Transverse colon (tissue), 4 donors: ENCODE measurements at regions of chr9 and their contacts with region 1.

Region 1: GRCh38 chr9:103574056-103574455 is 520.1 kb upstream of the SMC2 start:
- DNase-seq: no peak
- H3K4me3 ChIP-seq: no peak overlapping the region
- H3K27ac ChIP-seq: no peak overlapping the region
- H3K4me1 ChIP-seq: no peaks in the 10 kb centered on the region
- H3K27me3 ChIP-seq: no peaks in the 10 kb centered on the region
- CTCF ChIP-seq: no peak
- EP300 ChIP-seq: no peak
- POLR2A ChIP-seq: no peak

Region 2: GRCh38 chr9:103474156-103474555 is 99.9 kb before region 1 on chr9:
- in situ Hi-C with region 1: loop called in 1 of 4 experiments (anchors 25 kb)
- intact Hi-C with region 1: no loop called
- DNase-seq: no peak
- H3K4me3 ChIP-seq: no peak overlapping the region
- H3K27ac ChIP-seq: no peak overlapping the region
- H3K4me1 ChIP-seq: no peaks in the 10 kb centered on the region
- H3K27me3 ChIP-seq: no peaks in the 10 kb centered on the region
- CTCF ChIP-seq: no peak
- EP300 ChIP-seq: no peak
- POLR2A ChIP-seq: no peak

Region 3: GRCh38 chr9:104247899-104248460 is 673.9 kb after region 1 on chr9:
- in situ Hi-C with region 1: no loop called
- intact Hi-C with region 1: no loop called
- DNase-seq: no peak
- H3K4me3 ChIP-seq: no peak overlapping the region
- H3K27ac ChIP-seq: no peak overlapping the region
- H3K4me1 ChIP-seq: no peaks in the 10 kb centered on the region
- H3K27me3 ChIP-seq: no peaks in the 10 kb centered on the region
- CTCF ChIP-seq: no peak
- EP300 ChIP-seq: no peak
- POLR2A ChIP-seq: no peak